MCF 10A (cell line): ENCODE measurements at regions of chr17 and their contacts with region 1.

Region 1: DNA sequence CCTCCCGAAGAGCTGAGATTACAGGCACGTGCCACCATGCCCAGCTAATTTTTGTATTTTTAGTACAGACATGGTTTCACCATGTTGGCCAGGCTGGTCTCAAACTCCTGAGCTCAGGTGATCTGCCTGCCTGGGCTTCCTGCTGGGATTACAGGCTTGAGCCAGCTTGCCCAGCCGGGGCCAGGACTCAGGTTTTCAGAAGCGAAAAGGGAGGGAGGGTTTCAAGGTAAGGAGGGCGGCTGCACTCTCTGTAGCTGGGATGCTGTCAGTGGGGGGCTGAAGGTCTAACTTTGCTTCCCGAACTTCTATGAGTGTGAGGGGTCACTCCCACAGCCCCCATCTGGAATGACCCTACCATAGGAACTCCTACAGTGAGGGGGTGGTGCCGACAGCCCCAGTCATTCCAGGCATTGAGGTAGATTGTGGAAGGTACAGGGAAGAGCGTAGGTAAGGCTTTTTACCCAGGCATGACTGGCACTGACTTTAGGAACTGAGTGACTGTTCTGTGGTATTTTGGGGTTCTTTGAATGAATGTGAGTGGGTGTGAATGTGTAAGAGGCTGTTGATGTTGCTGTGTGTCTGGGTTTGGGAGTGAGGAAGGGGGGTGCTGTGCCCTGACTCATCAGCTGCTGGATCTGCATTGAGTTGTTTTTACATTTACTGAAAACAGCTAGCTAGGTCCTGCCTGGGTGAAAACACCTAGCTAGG is 3.8 kb upstream of the C1QL1 start:
- DNase-seq: peak; percentile 90
- H3K4me3 Mint-ChIP-seq: peak overlapping the region; percentile 61
- H3K27ac Mint-ChIP-seq: peak overlapping the region; percentile 94
- H3K4me1 Mint-ChIP-seq: peaks cover 23% of the 10 kb centered on the region
- H3K27me3 Mint-ChIP-seq: no peaks in the 10 kb centered on the region
- CTCF ChIP-seq: no peak

Region 2: GRCh38 chr17:44941712-44942331 is 30.1 kb before region 1 on chr17:
- CTCF ChIA-PET with region 1: interaction called, 4 read pairs
- POLR2A ChIA-PET with region 1: interaction called, 4 read pairs
- intact Hi-C with region 1: loop called (anchors 2 kb)
- DNase-seq: no peak
- H3K4me3 Mint-ChIP-seq: no peak overlapping the region
- H3K27ac Mint-ChIP-seq: peak overlapping the region; percentile 77
- H3K4me1 Mint-ChIP-seq: peaks cover 19% of the 10 kb centered on the region
- H3K27me3 Mint-ChIP-seq: no peaks in the 10 kb centered on the region
- CTCF ChIP-seq: no peak

Region 3: DNA sequence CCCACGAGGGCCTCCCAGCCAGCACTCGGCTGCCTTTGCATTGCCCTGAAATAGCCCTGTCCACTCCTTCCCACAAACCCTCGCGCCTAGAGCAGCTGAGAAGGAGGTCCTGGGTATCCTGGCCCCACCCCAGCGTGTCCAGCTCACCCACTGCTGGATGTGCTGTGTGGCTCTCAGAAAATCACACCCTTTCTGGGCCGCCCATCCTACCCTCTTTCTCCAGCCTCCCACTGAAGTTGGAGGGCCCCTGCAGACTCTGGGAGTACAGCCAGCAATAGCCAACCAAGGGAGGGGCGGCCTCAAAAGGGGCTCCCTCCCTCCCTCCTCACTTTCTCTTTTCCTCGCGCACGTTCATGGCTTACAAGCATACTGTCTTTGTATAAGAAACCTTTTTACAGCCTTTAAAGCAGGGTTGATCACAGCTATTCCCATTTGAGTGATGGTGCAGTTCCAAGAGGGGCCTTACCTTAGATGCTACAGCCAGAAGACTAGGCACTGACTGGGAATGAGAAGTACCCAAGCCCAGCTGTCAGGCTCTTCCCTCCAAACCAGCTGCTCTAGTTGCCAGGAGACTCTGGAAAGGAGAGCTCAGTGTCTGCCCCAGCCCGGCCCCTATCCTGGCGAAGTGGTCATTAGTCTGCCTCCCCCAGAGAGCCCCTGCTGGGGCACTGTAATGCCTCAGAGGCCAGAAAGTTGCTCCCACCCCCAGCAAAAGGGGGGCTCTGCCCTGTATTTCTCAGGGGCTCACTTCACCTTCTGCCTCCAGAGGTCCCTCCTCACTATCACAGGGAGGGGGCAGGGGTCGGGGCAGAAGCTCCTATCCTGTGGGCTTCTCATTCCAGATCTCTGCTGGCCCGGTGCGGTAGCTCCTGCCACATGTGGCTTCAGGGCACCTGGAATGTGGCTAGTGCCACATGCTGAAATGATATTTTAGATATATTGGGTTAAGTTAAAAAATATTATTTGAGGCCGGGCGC is 41.4 kb after region 1 on chr17:
- CTCF ChIA-PET with region 1: no interaction called
- POLR2A ChIA-PET with region 1: interaction called, 10 read pairs
- intact Hi-C with region 1: no loop called
- DNase-seq: no peak
- H3K4me3 Mint-ChIP-seq: no peak overlapping the region
- H3K27ac Mint-ChIP-seq: no peak overlapping the region
- H3K4me1 Mint-ChIP-seq: no peaks in the 10 kb centered on the region
- H3K27me3 Mint-ChIP-seq: no peaks in the 10 kb centered on the region
- CTCF ChIP-seq: no peak